ENCODE measurements at regions of chr2 and their contacts with region 1.

Region 1: GRCh38 chr2:85712849-85713602 is 18.9 kb downstream of the GNLY start:
- H3K4me3 Mint-ChIP-seq: no peak overlapping the region
- H3K27ac Mint-ChIP-seq: peak overlapping the region; percentile 94
- H3K4me1 Mint-ChIP-seq: peaks cover 80% of the 10 kb centered on the region
- H3K27me3 Mint-ChIP-seq: no peaks in the 10 kb centered on the region

Region 2: DNA sequence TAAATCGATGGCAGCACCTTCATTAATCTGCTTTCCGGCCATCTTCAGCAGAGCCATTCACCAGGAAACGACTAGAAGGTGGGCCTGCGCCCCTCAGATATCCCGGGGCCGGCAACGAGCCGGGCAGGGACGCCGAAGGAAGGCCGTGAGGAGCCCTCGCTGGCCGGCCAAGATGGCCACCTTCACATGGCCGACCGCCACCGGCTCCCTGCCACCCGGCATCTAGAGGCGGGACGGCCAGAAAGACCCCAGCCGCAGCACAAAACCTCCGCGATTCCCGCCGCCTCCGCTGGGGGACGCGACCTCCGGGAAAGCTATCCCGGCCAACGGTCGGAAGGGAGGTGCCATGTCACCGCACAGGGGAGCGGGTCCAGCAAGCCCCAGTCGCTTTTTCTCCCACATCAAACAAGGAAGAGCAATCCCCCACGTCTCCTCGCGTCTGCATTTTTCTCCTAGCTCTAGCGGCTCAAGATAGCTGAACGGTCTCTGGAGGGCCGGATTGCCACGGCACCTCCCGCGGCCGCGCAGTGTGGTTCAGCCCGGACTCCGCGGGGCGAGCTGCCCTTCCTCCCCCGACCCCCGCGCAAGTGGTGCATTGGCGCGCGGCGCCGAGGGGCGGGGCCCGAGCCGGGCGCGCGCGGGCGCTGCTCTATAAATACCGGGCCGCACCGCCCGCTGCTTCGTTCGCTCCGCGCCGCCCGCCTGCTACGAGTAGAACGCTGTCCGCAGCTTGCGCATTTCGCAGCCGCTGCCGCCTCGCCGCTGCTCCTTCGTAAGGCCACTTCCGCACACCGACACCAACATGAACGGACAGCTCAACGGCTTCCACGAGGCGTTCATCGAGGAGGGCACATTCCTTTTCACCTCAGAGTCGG is 174.3 kb before region 1 on chr2 and contains the start of gene MAT2A:
- intact Hi-C with region 1: no loop called
- H3K4me3 Mint-ChIP-seq: peak within 1 kb of the TSS; percentile 96
- H3K27ac Mint-ChIP-seq: peak within 1 kb of the TSS; percentile 99
- H3K4me1 Mint-ChIP-seq: peaks cover 56% of the 10 kb centered on the region
- H3K27me3 Mint-ChIP-seq: no peaks in the 10 kb centered on the region

Region 3: DNA sequence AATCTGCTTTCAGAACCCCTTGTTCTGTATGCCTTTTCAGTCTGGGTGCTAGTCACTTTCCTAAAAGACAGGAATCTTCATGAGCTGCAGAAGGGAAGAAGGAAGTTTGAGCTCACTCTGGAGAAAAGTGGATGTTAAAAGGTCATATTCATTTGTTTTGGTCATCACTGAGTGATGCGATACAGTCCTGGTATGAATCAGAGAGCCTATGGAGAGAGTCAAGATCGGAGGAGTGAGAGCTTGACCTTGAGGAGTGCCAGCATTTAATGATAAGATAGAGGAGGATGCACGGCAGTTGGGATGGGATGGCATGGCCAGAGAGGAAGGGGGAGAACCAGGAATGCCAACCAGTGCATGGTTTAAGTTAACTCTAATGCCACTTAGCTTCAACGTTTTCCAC is 77.4 kb before region 1 on chr2:
- intact Hi-C with region 1: loop called (anchors 5 kb)
- H3K4me3 Mint-ChIP-seq: no peak overlapping the region
- H3K27ac Mint-ChIP-seq: peak overlapping the region; percentile 54
- H3K4me1 Mint-ChIP-seq: peaks cover 27% of the 10 kb centered on the region
- H3K27me3 Mint-ChIP-seq: no peaks in the 10 kb centered on the region

Region 4: DNA sequence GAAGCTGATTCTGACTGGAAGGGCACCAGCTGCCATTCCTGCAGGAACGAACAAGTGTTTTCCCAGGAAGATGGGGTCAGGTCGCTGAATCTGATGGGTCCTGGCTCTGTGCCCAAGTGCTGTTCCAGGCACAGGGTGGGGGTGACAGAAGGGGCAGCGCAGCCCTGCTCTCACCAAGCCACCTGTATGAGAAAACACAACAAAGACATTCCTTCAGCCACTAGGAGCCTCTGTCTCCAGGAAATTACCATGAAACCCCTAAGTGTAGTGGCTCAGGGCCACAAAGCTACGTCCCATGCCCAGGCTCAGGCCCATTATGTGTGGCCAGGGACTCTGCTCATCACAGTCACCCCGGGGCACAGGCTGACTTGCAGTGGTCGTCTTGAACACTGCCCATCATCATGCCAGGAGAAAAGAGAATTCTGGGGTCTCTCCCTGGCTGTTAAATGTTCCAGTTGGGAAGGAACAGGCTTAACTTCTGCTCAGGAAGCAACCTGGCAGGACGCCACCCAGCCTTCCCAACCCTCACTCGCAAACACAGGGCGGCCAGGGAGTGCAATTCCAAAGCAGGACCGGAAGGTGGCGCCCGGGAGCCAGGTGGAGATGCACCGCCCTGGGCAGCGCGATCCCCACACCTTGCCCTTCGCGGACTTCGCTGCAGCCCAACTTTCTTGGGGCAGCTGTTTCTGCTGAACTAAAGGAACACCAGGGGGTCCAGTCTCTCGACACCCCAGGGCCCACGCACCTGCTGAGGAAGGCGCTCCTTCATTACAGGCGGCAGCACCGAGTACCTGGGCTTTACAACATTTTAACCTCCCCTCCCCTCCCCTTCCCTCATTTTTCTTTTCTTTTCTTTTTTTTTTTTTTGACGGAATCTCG is 34.0 kb before region 1 on chr2:
- intact Hi-C with region 1: loop called (anchors 5 kb)
- H3K4me3 Mint-ChIP-seq: no peak overlapping the region
- H3K27ac Mint-ChIP-seq: no peak overlapping the region
- H3K4me1 Mint-ChIP-seq: peaks cover 39% of the 10 kb centered on the region
- H3K27me3 Mint-ChIP-seq: peaks cover 2% of the 10 kb centered on the region